H1 (cell line): ENCODE measurements at regions of chr1 and their contacts with region 1.

Region 1: DNA sequence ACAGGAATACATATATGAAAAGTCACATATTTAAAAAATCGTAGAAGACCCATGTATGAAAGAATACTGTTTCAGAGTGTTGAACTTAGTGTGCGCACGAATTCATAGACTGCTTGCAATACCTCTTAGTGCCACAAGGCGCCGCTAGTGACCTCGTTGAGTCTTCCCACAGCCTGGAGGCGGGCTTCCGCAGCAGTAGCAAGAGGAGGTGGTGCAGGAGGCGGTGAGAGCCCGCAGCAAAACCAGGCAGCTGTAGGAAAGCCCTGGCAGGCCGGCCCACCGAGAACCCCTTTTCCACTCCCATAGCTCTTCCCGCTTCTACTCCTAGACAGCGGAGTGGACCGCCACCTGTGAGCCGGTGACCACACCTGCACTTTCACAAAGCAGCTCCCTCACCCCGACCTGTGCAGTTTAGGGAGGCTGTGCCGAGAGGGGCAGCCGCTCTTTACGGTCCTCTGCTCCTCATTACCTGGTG is 23.5 kb downstream of the MTARC1 start:
- DNase-seq: peak in 1 of 2 experiments; percentile 84
- H3K4me3 ChIP-seq: peak overlapping the region in 2 of 4 experiments; percentile 23 to 49; a peak in 5 of 8 replicates
- H3K27ac ChIP-seq: no peak overlapping the region
- H3K4me1 ChIP-seq: peaks cover 0 to 6% (median under 1%) of the 10 kb centered on the region in 4 experiments; a peak in 2 of 7 replicates
- H3K27me3 ChIP-seq: no peaks in the 10 kb centered on the region
- CTCF ChIP-seq: peak; percentile 82 to 89 (median 86)
- EP300 ChIP-seq: no peak
- POLR2A ChIP-seq: no peak
- RAD21 ChIP-seq: peak; percentile 75 to 80

Region 2: DNA sequence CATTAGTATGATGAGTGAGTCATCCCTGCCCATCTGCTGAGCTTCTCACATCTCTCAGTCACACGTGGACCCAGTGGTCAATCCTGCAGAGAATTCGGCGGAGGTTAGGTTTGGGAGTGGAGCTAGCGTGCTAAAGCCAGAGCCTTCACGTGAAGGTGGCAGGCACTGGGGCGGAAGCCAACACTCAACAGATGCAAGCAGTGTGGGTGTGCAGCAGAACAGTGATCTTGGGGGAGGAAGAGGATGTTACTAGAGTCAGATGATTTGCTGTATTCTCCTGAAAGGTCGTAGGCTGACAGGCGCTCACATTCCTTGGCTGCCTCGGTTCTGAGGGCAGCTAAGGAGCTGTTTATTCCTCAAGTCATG is 113.4 kb before region 1 on chr1:
- CTCF ChIA-PET with region 1: no interaction called
- POLR2A ChIA-PET with region 1: no interaction called
- DNase-seq: no peak
- H3K4me3 ChIP-seq: no peak overlapping the region
- H3K27ac ChIP-seq: no peak overlapping the region
- H3K4me1 ChIP-seq: peaks cover 0 to 2% (median 0%) of the 10 kb centered on the region in 4 experiments; a peak in 1 of 7 replicates
- H3K27me3 ChIP-seq: peaks cover 0 to under 1% (median under 1%) of the 10 kb centered on the region in 4 experiments; a peak in 3 of 7 replicates
- CTCF ChIP-seq: no peak
- EP300 ChIP-seq: no peak
- POLR2A ChIP-seq: no peak
- RAD21 ChIP-seq: no peak

Region 3: DNA sequence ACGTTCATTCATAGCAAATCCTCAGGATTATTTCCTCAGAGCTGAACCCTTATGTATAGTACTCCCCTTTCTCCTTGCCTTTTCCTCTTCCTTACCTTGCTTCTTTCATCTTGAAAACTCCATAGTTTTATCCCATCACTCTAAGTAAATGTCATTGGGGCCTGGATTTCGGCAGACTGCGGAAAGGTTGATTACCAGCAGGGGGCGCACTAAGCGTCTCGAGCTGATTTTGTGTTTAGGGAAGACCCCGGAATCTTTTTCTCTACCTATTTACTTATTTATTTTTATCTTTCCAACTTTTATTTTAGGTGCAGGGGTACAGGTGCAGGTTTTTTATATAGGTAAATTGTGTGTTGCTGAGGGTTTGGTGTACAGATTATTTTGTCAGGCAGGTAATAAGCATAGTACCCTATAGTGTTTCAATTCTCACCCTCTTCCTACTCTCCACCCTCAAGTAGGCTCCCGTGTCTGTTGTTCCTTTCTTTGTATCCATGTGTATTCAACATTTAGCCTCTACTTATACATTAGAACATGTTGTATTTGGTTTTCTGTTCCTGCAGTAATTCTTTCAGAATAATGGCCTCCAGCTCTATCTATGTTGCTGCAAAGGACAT is 34.9 kb before region 1 on chr1:
- CTCF ChIA-PET with region 1: no interaction called
- POLR2A ChIA-PET with region 1: no interaction called
- DNase-seq: peak in 1 of 2 experiments; percentile 66
- H3K4me3 ChIP-seq: no peak overlapping the region
- H3K27ac ChIP-seq: no peak overlapping the region
- H3K4me1 ChIP-seq: no peaks in the 10 kb centered on the region
- H3K27me3 ChIP-seq: no peaks in the 10 kb centered on the region
- CTCF ChIP-seq: peak; percentile 44 to 49 (median 49)
- EP300 ChIP-seq: no peak
- POLR2A ChIP-seq: no peak
- RAD21 ChIP-seq: peak in 1 of 2 experiments; percentile 9; a peak in 1 of 4 replicates

Region 4: GRCh38 chr1:220786337-220787068 is 23.7 kb before region 1 on chr1 and contains the start of gene MTARC1:
- CTCF ChIA-PET with region 1: interaction called, 96 read pairs
- POLR2A ChIA-PET with region 1: interaction called, 15 read pairs
- DNase-seq: peak in 1 of 2 experiments; percentile 81
- H3K4me3 ChIP-seq: peak within 1 kb of the TSS; percentile 59 to 84 (median 69)
- H3K27ac ChIP-seq: peak within 1 kb of the TSS; percentile 63; the same call in 1 of the 2 replicates
- H3K4me1 ChIP-seq: peaks cover 4 to 14% (median 11%) of the 10 kb centered on the region in 4 experiments
- H3K27me3 ChIP-seq: no peaks in the 10 kb centered on the region
- CTCF ChIP-seq: peak in 2 of 3 experiments; percentile 12 to 27; a peak in 2 of 4 replicates
- EP300 ChIP-seq: no peak
- POLR2A ChIP-seq: peak in 1 of 2 experiments; percentile 59; a peak in 2 of 3 replicates
- RAD21 ChIP-seq: peak; percentile 5 to 7; a peak in 1 of 4 replicates
- total RNA-seq, gene MTARC1: 42.4 and 46.2 TPM in 2 replicates

Region 5: DNA sequence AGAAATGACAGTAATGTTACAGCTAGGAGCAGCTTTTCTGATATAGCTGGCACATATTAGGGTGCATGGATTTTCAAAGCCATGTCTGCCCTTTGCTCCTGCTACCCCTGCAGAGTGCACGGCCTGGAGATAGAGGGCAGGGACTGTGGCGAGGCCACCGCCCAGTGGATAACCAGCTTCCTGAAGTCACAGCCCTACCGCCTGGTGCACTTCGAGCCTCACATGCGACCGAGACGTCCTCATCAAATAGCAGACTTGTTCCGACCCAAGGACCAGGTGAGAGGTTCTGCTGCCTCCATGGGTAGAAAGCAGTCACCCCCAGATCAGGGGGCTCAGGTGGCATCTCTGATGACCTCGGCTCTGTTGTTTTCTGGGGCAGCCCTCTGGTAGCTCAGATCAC is 13.7 kb before region 1 on chr1:
- CTCF ChIA-PET with region 1: interaction called, 96 read pairs
- POLR2A ChIA-PET with region 1: no interaction called
- DNase-seq: no peak
- H3K4me3 ChIP-seq: no peak overlapping the region
- H3K27ac ChIP-seq: no peak overlapping the region
- H3K4me1 ChIP-seq: no peaks in the 10 kb centered on the region
- H3K27me3 ChIP-seq: no peaks in the 10 kb centered on the region
- CTCF ChIP-seq: no peak
- EP300 ChIP-seq: no peak
- POLR2A ChIP-seq: no peak
- RAD21 ChIP-seq: no peak; a peak in 1 of 4 replicates

Region 6: DNA sequence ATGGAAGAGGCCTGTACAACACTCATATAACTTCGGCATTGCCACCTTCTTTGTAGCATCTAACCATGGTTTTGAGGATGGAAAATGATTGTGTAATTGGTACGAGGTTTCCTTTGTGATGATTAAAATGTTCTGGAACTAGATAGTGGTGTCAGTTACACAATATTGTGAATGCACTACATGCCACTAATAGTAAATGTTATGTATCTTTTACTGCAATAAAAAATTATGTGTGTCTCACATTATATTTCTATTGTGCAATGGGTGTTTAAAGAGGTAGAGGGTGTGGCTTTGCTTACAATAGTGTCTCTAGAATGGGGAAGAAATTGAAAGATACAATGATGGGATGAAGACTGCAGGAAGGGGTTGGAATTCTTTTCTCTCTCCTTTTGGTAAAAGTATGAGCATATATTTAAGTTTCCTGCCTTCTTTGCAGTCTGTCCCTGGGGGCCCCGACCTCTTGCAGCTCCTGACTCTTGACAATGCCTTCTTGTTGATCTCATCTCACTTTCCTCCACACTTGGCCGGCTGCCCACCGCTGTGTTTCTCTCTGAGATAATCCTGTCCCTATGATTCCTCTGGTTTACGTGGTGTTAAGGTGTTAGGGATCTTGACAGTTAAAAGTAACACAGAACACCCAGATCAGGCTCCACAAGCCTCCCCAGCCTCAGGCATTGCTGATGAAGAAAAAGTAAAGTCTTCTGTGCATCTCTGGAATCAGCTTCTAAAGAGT is 15.8 kb after region 1 on chr1:
- CTCF ChIA-PET with region 1: interaction called, 26 read pairs
- POLR2A ChIA-PET with region 1: interaction called, 3 read pairs
- DNase-seq: no peak
- H3K4me3 ChIP-seq: no peak overlapping the region
- H3K27ac ChIP-seq: no peak overlapping the region
- H3K4me1 ChIP-seq: no peaks in the 10 kb centered on the region; a peak in 1 of 7 replicates
- H3K27me3 ChIP-seq: no peaks in the 10 kb centered on the region
- CTCF ChIP-seq: no peak
- EP300 ChIP-seq: no peak
- POLR2A ChIP-seq: no peak
- RAD21 ChIP-seq: no peak

Region 7: DNA sequence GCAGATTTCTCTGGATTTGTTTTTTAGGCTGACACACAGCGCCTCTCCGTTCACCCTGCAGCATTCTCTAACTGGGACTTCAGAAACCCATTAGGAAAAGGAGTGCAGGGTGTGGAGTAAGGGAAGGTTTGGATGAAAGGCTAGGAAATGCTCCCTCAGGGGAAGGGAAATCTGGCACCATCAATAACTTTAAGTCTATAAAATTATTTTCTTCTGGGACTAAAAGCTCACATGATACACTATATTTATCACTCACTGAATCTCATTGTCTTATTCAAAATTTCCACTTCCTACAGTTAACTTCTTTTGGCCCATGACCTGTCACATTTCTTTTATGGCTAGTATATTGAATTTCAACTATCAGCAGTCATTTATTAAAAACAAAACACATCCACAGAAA is 23.2 kb after region 1 on chr1:
- CTCF ChIA-PET with region 1: interaction called, 11 read pairs
- POLR2A ChIA-PET with region 1: no interaction called
- DNase-seq: no peak
- H3K4me3 ChIP-seq: no peak overlapping the region
- H3K27ac ChIP-seq: no peak overlapping the region
- H3K4me1 ChIP-seq: no peaks in the 10 kb centered on the region
- H3K27me3 ChIP-seq: no peaks in the 10 kb centered on the region; a peak in 1 of 7 replicates
- CTCF ChIP-seq: no peak
- EP300 ChIP-seq: no peak
- POLR2A ChIP-seq: no peak
- RAD21 ChIP-seq: no peak

Region 8: GRCh38 chr1:220841293-220841692 is 31.1 kb after region 1 on chr1:
- CTCF ChIA-PET with region 1: interaction called, 15 read pairs
- POLR2A ChIA-PET with region 1: no interaction called
- DNase-seq: no peak
- H3K4me3 ChIP-seq: no peak overlapping the region
- H3K27ac ChIP-seq: no peak overlapping the region
- H3K4me1 ChIP-seq: no peaks in the 10 kb centered on the region
- H3K27me3 ChIP-seq: no peaks in the 10 kb centered on the region
- CTCF ChIP-seq: peak in 2 of 3 experiments; percentile 44 to 49; a peak in 3 of 4 replicates
- EP300 ChIP-seq: no peak
- POLR2A ChIP-seq: no peak
- RAD21 ChIP-seq: peak; percentile 62 to 69

Region 9: GRCh38 chr1:220873868-220874655 is 63.8 kb after region 1 on chr1:
- CTCF ChIA-PET with region 1: interaction called, 21 read pairs
- POLR2A ChIA-PET with region 1: no interaction called
- DNase-seq: peak in 1 of 2 experiments; percentile 74
- H3K4me3 ChIP-seq: no peak overlapping the region
- H3K27ac ChIP-seq: no peak overlapping the region
- H3K4me1 ChIP-seq: peaks cover 3 to 11% (median 7%) of the 10 kb centered on the region in 4 experiments
- H3K27me3 ChIP-seq: peaks cover 37 to 49% (median 45%) of the 10 kb centered on the region in 4 experiments
- CTCF ChIP-seq: peak; percentile 41 to 75 (median 73)
- EP300 ChIP-seq: no peak
- POLR2A ChIP-seq: no peak
- RAD21 ChIP-seq: peak; percentile 86 to 91